HEK293T (cell line): ENCODE measurements at regions of chr22 and their contacts with region 1.

Region 1: GRCh38 chr22:29766632-29767170 is at the start of gene ZMAT5:
- DNase-seq: peak; percentile 100

Region 2: DNA sequence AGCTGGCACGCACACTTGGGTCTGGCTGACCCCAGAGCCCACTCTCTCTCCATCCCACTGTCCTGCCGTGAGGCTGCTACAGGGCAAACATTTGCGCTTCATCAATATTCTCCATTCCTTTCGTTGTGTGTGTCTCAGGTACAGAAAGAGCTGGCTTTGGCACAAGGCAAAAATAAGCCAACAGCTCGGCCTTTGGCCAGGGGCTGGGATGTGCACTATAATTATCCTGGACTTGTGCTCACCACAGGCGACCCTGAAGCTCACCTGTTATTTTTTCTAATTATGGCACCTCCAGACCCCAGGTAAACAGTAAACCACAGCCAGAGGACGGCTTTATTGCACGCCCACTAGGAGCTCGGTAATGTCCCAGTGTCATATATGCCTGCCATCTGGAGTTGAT is 10.8 kb before region 1 on chr22:
- CTCF ChIA-PET with region 1: no interaction called
- POLR2A ChIA-PET with region 1: interaction called, 16 read pairs
- DNase-seq: no peak